GM12878 (cell line): ENCODE measurements at regions of chr19 and their contacts with region 1.

Region 1: DNA sequence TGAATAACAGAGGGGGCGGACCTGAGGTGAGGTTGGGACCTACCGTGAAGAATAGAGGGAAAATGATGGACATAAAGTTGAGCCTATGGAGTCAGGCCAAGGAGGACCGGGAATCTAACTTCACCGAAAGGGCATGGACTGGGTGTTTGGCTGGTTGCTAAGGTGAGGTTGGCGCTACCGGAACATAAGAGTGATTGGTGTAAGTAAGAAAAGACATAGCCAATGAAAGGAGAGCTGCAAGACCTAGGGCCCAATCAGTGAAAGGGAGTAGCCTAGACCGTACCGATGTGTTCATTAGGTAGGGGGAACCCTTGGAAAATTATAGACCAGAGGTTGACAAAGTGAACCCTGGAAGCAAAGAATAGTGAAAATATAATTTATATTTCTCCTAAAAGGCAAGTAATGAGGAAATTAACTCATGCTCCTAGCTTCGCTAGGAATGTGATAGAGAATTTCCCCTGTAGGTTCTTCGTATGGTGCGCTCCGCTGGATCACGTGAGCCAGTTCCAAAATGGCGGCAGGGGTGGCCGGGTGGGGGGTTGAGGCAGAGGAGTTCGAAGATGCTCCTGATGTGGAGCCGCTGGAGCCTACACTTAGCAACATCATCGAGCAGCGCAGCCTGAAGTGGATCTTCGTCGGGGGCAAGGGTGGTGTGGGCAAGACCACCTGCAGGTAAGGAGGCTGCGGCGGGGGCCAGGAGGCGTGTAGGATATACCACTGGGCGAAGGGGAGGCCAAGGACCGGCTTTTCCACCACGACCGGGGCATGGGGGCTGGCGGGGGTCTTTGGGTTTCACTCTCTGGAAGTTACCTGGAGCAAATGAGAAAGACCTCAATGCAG is at the start of gene GET3:
- DNase-seq: peak; percentile 99
- ATAC-seq: peak; percentile 92
- H3K4me3 ChIP-seq: peak within 1 kb of the TSS; percentile 90
- H3K27ac ChIP-seq: peak within 1 kb of the TSS; percentile 98
- H3K4me1 ChIP-seq: peaks cover 19% of the 10 kb centered on the region
- H3K27me3 ChIP-seq: no peaks in the 10 kb centered on the region
- CTCF ChIP-seq: no peak
- EP300 ChIP-seq: no peak
- POLR2A ChIP-seq: peak; percentile 93
- RAD21 ChIP-seq: no peak
- polyA plus RNA-seq, gene GET3: 14.5 to 22.0 TPM

Region 2: GRCh38 chr19:12716861-12717260 is 20.4 kb before region 1 on chr19:
- CTCF ChIA-PET with region 1: interaction called, 30 read pairs
- POLR2A ChIA-PET with region 1: interaction called, 58 read pairs
- RAD21 ChIA-PET with region 1: interaction called, 31 read pairs
- SMC1A ChIA-PET with region 1: interaction called, 28 read pairs
- in situ Hi-C with region 1: no loop called
- intact Hi-C with region 1: no loop called
- DNase-seq: no peak
- ATAC-seq: peak; percentile 78
- H3K4me3 ChIP-seq: no peak overlapping the region
- H3K27ac ChIP-seq: no peak overlapping the region
- H3K4me1 ChIP-seq: 0 out of 2 replicates have a peak, but pooled peaks cover 4% of the 10 kb centered on the region
- H3K27me3 ChIP-seq: no peaks in the 10 kb centered on the region
- CTCF ChIP-seq: peak; percentile 45 to 64 (median 48); a peak in 5 of 6 replicates
- EP300 ChIP-seq: no peak
- POLR2A ChIP-seq: no peak
- RAD21 ChIP-seq: peak; percentile 50; the same call in 1 of the 2 replicates

Region 3: DNA sequence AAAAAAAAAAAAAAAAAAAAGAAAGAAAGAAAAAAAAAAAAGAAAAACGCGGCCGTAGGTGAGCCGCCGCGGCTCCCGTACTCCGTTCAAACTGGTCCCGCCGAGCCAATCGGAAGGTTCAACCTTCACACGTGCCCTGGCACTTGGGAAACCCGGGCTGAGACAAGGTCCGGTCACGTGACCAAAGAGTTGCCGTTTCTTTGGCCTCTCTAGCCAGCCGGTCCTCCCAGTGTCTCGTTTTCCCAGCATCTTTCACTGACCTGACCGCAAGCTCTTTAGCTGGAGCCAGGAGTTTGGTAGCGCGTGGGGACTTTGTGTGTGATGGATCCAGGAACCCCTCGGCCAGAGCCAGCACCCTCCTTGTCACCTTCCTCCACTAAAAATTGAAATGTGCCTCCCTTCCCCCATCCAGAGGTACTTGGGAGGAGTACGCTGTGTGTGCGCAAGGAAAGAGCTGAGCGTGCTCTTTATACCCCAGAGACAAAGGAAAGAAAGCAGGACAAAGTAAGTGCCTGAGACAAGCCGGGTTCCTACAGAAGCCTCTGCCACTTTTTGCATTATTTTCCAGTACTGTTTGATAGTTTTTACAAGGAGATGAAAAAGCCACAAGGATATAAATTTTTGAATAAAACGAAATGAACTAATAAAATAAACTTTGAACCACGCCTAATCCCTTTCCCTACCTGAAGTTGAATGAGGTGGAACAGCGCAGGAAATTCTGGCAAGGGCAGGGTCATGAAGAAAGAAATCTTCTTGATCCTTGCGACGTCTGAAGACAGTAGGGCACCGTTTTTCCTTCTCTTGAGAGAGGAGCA is 14.4 kb before region 1 on chr19:
- CTCF ChIA-PET with region 1: interaction called, 30 read pairs
- POLR2A ChIA-PET with region 1: interaction called, 58 read pairs
- RAD21 ChIA-PET with region 1: interaction called, 31 read pairs
- SMC1A ChIA-PET with region 1: interaction called, 28 read pairs
- in situ Hi-C with region 1: no loop called
- intact Hi-C with region 1: no loop called
- DNase-seq: peak; percentile 81
- ATAC-seq: peak; percentile 87
- H3K4me3 ChIP-seq: peak overlapping the region; percentile 91
- H3K27ac ChIP-seq: peak overlapping the region; percentile 81
- H3K4me1 ChIP-seq: peaks cover 8% of the 10 kb centered on the region; the same call in 1 of the 2 replicates
- H3K27me3 ChIP-seq: no peaks in the 10 kb centered on the region
- CTCF ChIP-seq: no peak
- EP300 ChIP-seq: peak; percentile 4 to 40; a peak in 1 of 4 replicates
- POLR2A ChIP-seq: peak; percentile 51; the same call in 1 of the 2 replicates
- RAD21 ChIP-seq: no peak

Region 4: GRCh38 chr19:12766051-12766521 is 28.9 kb after region 1 on chr19:
- CTCF ChIA-PET with region 1: interaction called, 18 read pairs
- POLR2A ChIA-PET with region 1: no interaction called
- RAD21 ChIA-PET with region 1: interaction called, 3 read pairs
- SMC1A ChIA-PET with region 1: interaction called, 3 read pairs
- in situ Hi-C with region 1: no loop called
- intact Hi-C with region 1: no loop called
- DNase-seq: no peak
- ATAC-seq: peak; percentile 94
- H3K4me3 ChIP-seq: peak overlapping the region; percentile 49; the same call in 1 of the 2 replicates
- H3K27ac ChIP-seq: no peak overlapping the region
- H3K4me1 ChIP-seq: no peaks in the 10 kb centered on the region; the same call in 1 of the 2 replicates
- H3K27me3 ChIP-seq: no peaks in the 10 kb centered on the region; a peak in 1 of 4 replicates
- CTCF ChIP-seq: peak; percentile 80 to 96 (median 86)
- EP300 ChIP-seq: no peak
- POLR2A ChIP-seq: no peak
- RAD21 ChIP-seq: peak; percentile 65